Head of caudate nucleus (tissue), 42 donors: ENCODE measurements at regions of chr17 and their contacts with region 1.

Region 1: GRCh38 chr17:21119247-21119918 is 7.4 kb upstream of the DHRS7B start:
- DNase-seq: peak; percentile 52 to 89 (median 77)

Region 2: DNA sequence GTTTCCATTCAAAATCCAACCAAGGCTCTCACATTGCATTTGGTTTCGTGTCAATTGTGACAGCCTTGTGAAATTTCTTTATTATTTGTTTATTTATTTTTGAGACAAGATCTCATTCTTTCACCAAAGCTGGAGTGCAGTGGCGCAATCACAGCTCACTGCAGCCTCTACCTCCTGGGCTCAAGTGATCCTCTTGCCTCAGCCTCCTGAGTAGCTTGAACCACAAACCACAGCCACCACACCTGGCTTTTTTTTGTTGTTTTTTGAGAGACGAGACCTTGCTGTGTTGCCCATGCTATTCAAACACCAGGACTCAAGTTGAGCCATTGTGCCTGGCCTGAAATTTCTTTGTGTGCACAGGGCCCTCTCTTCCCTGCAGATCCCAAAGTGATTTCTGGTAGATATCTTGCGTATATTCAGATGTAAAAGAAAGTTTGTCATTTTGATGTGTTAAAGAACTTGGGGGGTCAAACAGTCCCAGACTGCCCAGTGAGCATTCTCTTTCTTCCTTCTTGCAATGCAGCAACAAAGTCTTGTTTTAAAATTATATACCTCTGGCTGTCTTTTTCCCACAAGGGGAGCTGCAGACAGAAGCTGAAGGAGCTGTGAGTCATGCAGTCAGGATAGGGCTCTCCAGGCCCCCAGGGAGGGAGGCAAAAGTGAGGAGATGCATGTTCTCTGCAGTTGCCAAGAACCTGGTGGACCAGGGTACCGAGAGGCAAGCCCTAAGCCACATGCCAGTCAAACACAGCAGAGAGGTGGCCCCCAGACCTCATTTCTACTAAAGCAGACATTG is 61.1 kb before region 1 on chr17:
- intact Hi-C with region 1: loop called (anchors 10 kb)
- DNase-seq: no peak

Region 3: GRCh38 chr17:21214015-21214776 is 94.8 kb after region 1 on chr17 and contains the start of gene TMEM11:
- intact Hi-C with region 1: loop called (anchors 10 kb)
- DNase-seq: peak; percentile 87 to 99 (median 97)

Region 4: DNA sequence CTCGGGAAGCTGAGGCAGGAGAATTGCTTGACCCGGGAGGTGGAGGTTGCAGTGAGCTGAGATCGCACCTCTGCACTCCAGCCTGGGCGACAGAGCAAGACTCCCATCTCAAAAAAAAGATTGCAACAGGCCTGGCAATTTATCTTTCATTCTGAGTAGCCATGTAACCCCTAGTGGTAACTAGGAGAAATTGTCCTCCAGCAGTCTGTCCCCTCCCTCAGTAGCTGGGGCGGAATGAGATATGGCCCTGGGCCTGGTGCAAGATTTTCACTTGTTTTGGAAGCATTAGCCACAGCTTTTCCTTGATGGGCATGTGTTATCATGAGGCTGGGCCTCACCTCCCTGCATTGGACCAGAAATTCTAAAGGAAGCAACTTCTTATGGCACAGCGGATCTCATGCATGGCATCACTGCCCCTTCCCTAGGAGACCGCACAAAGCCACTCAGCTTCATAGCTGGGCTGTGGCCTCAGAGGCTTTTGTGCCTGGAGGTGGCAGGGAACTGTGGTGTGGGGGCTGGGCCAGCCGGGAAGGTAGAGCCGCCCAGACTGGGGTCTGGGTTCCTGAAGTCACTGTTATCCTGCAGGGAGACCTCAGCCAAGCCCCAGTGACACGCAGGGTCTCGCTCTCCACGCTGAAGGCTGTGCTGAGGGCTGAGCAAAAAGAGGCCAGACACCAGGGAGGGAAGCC is 120.4 kb after region 1 on chr17:
- intact Hi-C with region 1: loop called (anchors 10 kb)
- DNase-seq: no peak